Caco-2 (cell line): ENCODE measurements at regions of chr15 and their contacts with region 1.

Region 1: DNA sequence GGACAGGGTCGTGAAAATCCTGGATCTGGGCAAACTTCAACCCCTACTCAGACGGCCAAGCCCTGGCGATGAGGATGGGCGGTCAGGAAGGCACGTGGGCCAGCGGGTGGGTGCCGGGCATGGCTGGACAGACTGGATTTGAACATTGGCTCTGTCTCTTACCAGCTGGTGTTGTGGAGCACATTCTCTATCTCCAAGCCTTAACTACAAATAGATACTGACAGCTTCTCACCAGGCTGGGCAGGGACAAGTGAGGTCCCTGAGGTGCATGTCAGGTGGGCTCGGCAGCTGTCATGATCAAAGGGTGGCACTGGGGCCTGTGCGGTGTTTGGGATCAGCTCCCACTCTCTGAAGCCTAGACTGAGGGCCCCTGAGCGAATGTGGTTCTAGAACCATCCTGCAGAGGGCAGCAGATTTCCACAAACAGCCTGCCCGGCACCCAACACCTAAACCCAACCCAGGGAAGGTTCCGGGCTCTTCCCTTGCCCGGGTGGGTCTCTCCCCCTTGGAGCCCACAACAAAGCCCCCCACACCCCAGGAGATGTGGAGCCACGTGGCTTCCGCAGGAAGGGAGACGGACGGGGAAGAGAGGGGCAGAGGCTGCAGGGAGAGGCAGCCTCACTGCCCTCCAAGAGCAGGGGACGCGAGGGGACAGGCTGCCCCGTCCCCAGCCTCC is 58.4 kb downstream of the RGMA start:
- DNase-seq: peak; percentile 60 to 74
- H3K4me3 ChIP-seq: no peak overlapping the region
- H3K4me3 Mint-ChIP-seq: no peak overlapping the region
- H3K27ac Mint-ChIP-seq: peak overlapping the region; percentile 87
- H3K4me1 ChIP-seq: no peaks in the 10 kb centered on the region
- H3K4me1 Mint-ChIP-seq: peaks cover 18% of the 10 kb centered on the region
- H3K27me3 ChIP-seq: no peaks in the 10 kb centered on the region
- H3K27me3 Mint-ChIP-seq: no peaks in the 10 kb centered on the region
- CTCF ChIP-seq: peak; percentile 76 to 84

Region 2: GRCh38 chr15:93072411-93073394 is 42.1 kb after region 1 on chr15:
- CTCF ChIA-PET with region 1: interaction called, 9 read pairs
- POLR2A ChIA-PET with region 1: no interaction called
- intact Hi-C with region 1: loop called (anchors 2 kb)
- DNase-seq: peak; percentile 82 to 90
- H3K4me3 ChIP-seq: peak overlapping the region; percentile 52
- H3K4me3 Mint-ChIP-seq: peak overlapping the region; percentile 95
- H3K27ac Mint-ChIP-seq: peak overlapping the region; percentile 59
- H3K4me1 ChIP-seq: no peaks in the 10 kb centered on the region
- H3K4me1 Mint-ChIP-seq: peaks cover 19% of the 10 kb centered on the region
- H3K27me3 ChIP-seq: no peaks in the 10 kb centered on the region
- H3K27me3 Mint-ChIP-seq: peaks cover 16% of the 10 kb centered on the region
- CTCF ChIP-seq: no peak

Region 3: DNA sequence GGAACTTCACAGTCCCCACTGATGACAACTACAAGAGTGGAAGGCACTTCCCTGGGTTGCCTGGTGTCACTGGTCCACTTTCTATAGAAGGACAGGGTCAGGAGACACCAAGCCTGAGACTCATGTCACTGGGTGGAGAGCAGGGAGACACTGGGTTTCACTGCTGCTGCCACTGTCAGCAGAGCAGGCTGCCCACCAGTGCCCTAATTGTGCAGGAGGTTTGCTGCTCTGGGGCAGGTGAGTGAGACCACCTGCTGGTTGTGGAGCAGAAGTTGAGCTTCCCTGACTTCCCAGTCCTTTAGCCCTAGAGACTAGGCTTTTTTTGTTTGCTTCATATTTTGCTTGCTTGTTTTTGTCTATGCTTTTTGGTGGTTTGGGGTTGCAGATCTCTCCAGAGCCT is 586.9 kb after region 1 on chr15:
- CTCF ChIA-PET with region 1: interaction called, 3 read pairs
- POLR2A ChIA-PET with region 1: no interaction called
- intact Hi-C with region 1: loop called (anchors 10 kb)
- DNase-seq: peak in 1 of 2 experiments; percentile 5
- H3K4me3 ChIP-seq: no peak overlapping the region
- H3K4me3 Mint-ChIP-seq: no peak overlapping the region
- H3K27ac Mint-ChIP-seq: no peak overlapping the region
- H3K4me1 ChIP-seq: no peaks in the 10 kb centered on the region
- H3K4me1 Mint-ChIP-seq: no peaks in the 10 kb centered on the region
- H3K27me3 ChIP-seq: no peaks in the 10 kb centered on the region
- H3K27me3 Mint-ChIP-seq: peaks cover 20% of the 10 kb centered on the region
- CTCF ChIP-seq: peak in 1 of 2 experiments; percentile 35